ENCODE measurements at regions of chr5 and their contacts with region 1.

Region 1: GRCh38 chr5:112860929-112861637 is at the start of gene SRP19:
- DNase-seq: peak; percentile 97
- ATAC-seq: peak; percentile 98
- total RNA-seq, gene SRP19: 24.8 TPM

Region 2: DNA sequence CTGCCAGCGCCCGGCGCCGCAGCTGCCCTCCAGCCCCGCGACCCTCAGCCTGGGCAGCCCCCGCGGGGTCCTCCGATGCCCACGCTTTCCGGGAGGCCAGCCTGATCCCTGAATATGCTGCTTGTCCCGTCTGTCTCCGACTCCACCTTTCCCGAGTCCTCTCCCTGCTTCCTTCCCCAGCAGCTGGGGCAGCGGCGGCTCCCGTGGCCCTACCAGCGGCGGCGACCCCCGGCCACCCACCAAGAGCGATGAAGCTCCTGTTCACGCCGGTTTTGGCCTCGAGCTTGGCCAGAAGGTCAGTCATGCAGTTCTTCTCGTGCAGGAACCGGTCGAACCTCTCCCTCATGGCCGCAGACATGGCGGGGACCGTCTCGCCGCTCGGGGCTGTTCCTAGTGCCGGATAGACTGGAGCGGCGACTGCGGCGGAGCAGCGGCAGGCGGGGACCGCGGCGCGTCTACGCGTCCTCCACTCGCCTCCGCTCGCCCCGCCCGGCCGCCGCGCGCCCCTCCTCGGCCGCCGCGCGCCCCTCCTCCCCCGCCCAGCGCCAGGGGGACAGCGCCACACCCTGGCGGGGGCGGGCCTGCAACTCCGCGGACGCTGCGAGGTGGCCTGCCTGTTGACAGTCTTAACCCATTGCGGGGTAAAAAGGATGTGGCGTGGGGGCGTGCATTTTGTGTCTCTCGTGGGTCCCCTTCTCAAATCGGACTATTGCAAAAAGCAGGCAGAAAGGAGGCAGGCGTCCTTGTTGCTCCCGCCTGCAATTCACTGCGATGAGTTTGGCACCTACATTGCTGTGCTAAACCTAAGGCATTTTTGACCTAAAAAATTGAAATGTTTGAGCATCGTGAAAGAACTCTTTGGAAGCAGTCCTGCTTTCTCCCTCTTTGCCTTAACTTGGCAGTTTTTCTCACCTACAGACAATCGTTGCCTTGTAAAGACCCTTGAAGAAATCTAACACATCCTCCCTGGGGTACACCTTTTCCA is 61.0 kb after region 1 on chr5 and contains the start of gene REEP5:
- intact Hi-C with region 1: loop called (anchors 5 kb)
- DNase-seq: peak; percentile 92
- ATAC-seq: peak; percentile 95
- total RNA-seq, gene REEP5: 112 TPM

Region 3: GRCh38 chr5:112976432-112977309 is 115.6 kb after region 1 on chr5 and contains the start of gene DCP2:
- intact Hi-C with region 1: loop called (anchors 5 kb)
- DNase-seq: peak; percentile 97
- ATAC-seq: peak; percentile 98
- total RNA-seq, gene DCP2: 19.2 TPM

Measured in Right ventricle myocardium superior (tissue), 1 donor.